Endothelial cell of umbilical vein (primary cell): ENCODE measurements at regions of chr9 and their contacts with region 1.

Region 1: DNA sequence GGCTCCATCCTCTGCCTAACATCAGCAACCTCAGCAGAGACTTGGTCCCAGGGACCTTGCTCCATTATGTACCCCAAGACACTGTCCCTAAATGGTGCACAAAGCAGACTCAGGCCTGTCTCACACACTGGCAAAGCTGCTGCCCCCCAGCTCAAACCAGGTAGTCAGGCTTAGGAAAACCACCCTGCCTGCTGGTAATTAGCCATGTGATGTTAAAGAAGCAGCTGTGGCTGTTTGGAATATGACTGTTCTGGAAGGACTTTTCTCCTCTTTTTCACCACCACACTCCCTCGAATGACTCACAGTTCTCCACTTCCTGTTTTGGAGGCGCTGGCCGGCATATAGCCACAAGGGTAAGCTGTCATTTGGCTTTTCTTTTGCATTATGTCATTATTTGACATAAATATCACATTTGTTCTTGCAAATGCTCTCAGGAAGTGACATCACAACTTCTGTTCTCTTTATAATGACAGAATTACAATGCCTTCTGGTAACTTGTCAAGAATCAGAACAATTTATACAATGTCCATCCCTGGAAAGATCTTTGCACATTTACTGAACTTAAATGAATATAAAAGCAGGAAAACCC is 113.9 kb downstream of the SUSD1 start:
- DNase-seq: peak; percentile 98
- H3K4me3 ChIP-seq: no peak overlapping the region
- H3K27ac ChIP-seq: peak overlapping the region; percentile 97
- H3K4me1 ChIP-seq: peaks cover 35% of the 10 kb centered on the region
- H3K27me3 ChIP-seq: no peaks in the 10 kb centered on the region
- CTCF ChIP-seq: no peak
- POLR2A ChIP-seq: peak; percentile 27

Region 2: GRCh38 chr9:111926421-111926875 is 134.8 kb before region 1 on chr9:
- CTCF ChIA-PET with region 1: no interaction called
- POLR2A ChIA-PET with region 1: no interaction called
- dilution Hi-C with region 1: no loop called
- intact Hi-C with region 1: loop called (anchors 1 kb)
- DNase-seq: peak; percentile 95
- H3K4me3 ChIP-seq: no peak overlapping the region
- H3K27ac ChIP-seq: peak overlapping the region; percentile 99
- H3K4me1 ChIP-seq: peaks cover 39% of the 10 kb centered on the region
- H3K27me3 ChIP-seq: no peaks in the 10 kb centered on the region
- CTCF ChIP-seq: no peak
- POLR2A ChIP-seq: no peak

Region 3: GRCh38 chr9:112012026-112012902 is 49.0 kb before region 1 on chr9:
- CTCF ChIA-PET with region 1: interaction called, 7 read pairs
- POLR2A ChIA-PET with region 1: no interaction called
- dilution Hi-C with region 1: no loop called
- intact Hi-C with region 1: loop called (anchors 1 kb)
- DNase-seq: peak; percentile 94
- H3K4me3 ChIP-seq: no peak overlapping the region
- H3K27ac ChIP-seq: peak overlapping the region; percentile 95
- H3K4me1 ChIP-seq: peaks cover 22% of the 10 kb centered on the region
- H3K27me3 ChIP-seq: no peaks in the 10 kb centered on the region
- CTCF ChIP-seq: no peak
- POLR2A ChIP-seq: peak; percentile 26

Region 4: GRCh38 chr9:112029921-112030444 is 31.3 kb before region 1 on chr9:
- CTCF ChIA-PET with region 1: no interaction called
- POLR2A ChIA-PET with region 1: no interaction called
- dilution Hi-C with region 1: no loop called
- intact Hi-C with region 1: loop called (anchors 1 kb)
- DNase-seq: peak; percentile 86
- H3K4me3 ChIP-seq: no peak overlapping the region
- H3K27ac ChIP-seq: peak overlapping the region; percentile 52
- H3K4me1 ChIP-seq: peaks cover 29% of the 10 kb centered on the region
- H3K27me3 ChIP-seq: no peaks in the 10 kb centered on the region
- CTCF ChIP-seq: no peak
- POLR2A ChIP-seq: no peak

Region 5: GRCh38 chr9:112050544-112051475 is 10.4 kb before region 1 on chr9:
- CTCF ChIA-PET with region 1: interaction called, 12 read pairs
- POLR2A ChIA-PET with region 1: interaction called, 6 read pairs
- dilution Hi-C with region 1: no loop called
- intact Hi-C with region 1: loop called (anchors 1 kb)
- DNase-seq: peak; percentile 92
- H3K4me3 ChIP-seq: no peak overlapping the region
- H3K27ac ChIP-seq: peak overlapping the region; percentile 80
- H3K4me1 ChIP-seq: peaks cover 31% of the 10 kb centered on the region
- H3K27me3 ChIP-seq: no peaks in the 10 kb centered on the region
- CTCF ChIP-seq: no peak
- POLR2A ChIP-seq: no peak